ENCODE measurements at regions of chr10 and their contacts with region 1.

Region 1: DNA sequence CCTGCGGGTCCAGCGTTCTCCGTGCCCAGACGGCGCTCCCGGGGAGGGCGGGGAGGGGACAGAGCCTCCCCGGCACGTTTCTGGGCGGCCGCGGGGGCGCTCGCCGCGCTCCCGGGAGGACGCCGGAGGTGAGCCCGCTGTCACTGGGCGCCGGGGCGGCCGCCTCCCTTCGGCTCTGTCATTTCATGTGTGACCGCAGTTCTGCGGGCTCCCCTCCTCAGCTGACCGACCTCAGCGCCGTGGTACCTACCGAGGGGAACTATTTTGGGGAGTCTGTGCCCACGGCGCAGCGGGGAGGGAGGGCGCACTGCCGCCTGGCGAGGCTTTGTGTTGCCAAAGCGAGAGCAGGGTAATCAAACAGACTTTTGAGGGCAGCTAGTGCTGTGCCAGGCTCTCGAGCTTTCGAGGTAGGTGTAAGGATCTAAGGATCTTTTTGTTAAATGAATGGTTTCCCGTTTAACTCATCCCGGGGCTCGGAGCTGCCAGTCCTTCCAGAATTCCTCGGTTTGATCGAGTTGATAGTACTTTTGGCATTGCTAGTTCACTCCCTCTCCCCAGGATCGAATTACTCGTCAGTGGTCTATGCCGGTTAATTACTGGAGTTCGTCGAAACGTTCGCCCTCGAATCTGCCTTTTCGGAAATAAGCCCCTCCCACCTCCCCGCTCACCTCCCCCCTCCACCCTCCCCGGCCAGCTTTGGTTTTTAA is 1.9 kb downstream of the ARID5B start:
- DNase-seq: peak; percentile 76
- H3K4me3 ChIP-seq: peak overlapping the region; percentile 61 to 90 (median 79)
- H3K27ac ChIP-seq: peak overlapping the region; percentile 98
- H3K4me1 ChIP-seq: peaks cover 10 to 47% (median 31%) of the 10 kb centered on the region in 4 donors
- H3K27me3 ChIP-seq: no peaks in the 10 kb centered on the region
- CTCF ChIP-seq: peak in 4 of 5 experiments; percentile 19 to 38 (median 30)
- EP300 ChIP-seq: no peak
- POLR2A ChIP-seq: peak; percentile 72

Region 2: DNA sequence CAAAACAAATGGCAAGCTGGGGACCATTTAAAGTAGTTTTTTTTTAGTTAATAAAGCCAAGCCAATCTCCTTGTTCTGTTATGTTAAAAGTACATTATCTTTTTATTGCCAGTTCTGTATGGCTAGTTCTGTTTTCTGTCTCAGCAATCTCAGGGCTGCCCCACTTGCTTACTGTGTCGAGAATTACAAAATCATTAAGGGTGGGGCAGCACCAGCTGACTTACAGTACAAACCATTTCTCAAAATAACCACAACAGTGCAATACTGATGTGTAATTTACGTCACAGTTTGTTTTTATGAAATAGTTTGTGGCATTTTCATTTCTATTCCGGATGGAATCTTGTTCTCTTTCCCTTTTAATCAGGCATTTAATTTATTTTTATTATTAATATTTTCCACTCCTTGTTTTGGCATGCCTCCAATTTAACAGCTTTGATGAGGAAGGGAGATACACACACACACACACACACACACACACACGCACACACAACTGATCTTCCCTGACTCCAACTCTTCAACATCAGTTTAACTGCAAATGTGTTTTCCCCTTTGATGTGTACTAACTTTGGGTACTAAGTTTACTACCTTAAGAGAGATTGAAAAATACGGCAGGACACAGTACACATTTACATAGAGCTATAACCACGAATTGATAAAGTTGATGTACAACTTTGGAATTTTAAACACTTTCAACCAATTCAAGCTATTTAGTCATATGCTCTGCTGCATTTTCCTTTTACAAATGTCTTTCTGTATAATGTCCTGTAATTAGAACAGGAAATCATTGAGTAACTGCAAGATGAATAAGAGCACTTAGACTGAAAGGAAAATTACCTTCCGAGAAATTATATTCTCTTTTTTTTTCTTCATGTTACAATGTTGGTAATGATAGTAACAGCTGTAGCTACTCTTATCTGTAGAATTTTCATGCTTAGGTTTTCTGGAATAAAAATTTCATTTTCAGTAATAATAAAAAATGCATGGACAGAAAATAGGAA is 89.6 kb after region 1 on chr10:
- in situ Hi-C with region 1: no loop called
- intact Hi-C with region 1: loop called (anchors 10 kb)
- DNase-seq: peak; percentile 56
- H3K4me3 ChIP-seq: peak overlapping the region in 1 of 4 donors; percentile 1
- H3K27ac ChIP-seq: peak overlapping the region; percentile 74 to 83 (median 76)
- H3K4me1 ChIP-seq: peaks cover 26 to 52% (median 30%) of the 10 kb centered on the region in 4 donors
- H3K27me3 ChIP-seq: no peaks in the 10 kb centered on the region
- CTCF ChIP-seq: peak in 1 of 5 experiments; percentile 8
- EP300 ChIP-seq: peak; percentile 95
- POLR2A ChIP-seq: no peak

Measured in transverse colon (tissue), 4 donors.